Mammary epithelial cell (primary cell): ENCODE measurements at regions of chr6 and their contacts with region 1.

Region 1: GRCh38 chr6:134190883-134191282 is 127.0 kb downstream of the SGK1 start:
- DNase-seq: no peak
- H3K4me3 ChIP-seq: no peak overlapping the region
- H3K27ac ChIP-seq: no peak overlapping the region
- H3K4me1 ChIP-seq: no peaks in the 10 kb centered on the region
- H3K27me3 ChIP-seq: no peaks in the 10 kb centered on the region
- CTCF ChIP-seq: no peak

Region 2: GRCh38 chr6:134074151-134075055 is 116.5 kb before region 1 on chr6:
- CTCF ChIA-PET with region 1: no interaction called
- dilution Hi-C with region 1: no loop called
- in situ Hi-C with region 1: no loop called
- intact Hi-C with region 1: no loop called
- DNase-seq: no peak
- H3K4me3 ChIP-seq: no peak overlapping the region
- H3K27ac ChIP-seq: no peak overlapping the region
- H3K4me1 ChIP-seq: peaks cover 8% of the 10 kb centered on the region
- H3K27me3 ChIP-seq: no peaks in the 10 kb centered on the region
- CTCF ChIP-seq: no peak

Region 3: GRCh38 chr6:134247231-134247833 is 56.4 kb after region 1 on chr6:
- CTCF ChIA-PET with region 1: no interaction called
- dilution Hi-C with region 1: loop called (anchors 5 kb)
- in situ Hi-C with region 1: no loop called
- intact Hi-C with region 1: no loop called
- DNase-seq: peak; percentile 78
- H3K4me3 ChIP-seq: no peak overlapping the region
- H3K27ac ChIP-seq: peak overlapping the region; percentile 37
- H3K4me1 ChIP-seq: peaks cover 22% of the 10 kb centered on the region
- H3K27me3 ChIP-seq: no peaks in the 10 kb centered on the region
- CTCF ChIP-seq: no peak